CD4-positive, alpha-beta T cell (primary cell): ENCODE measurements at regions of chr13 and their contacts with region 1.

Region 1: GRCh38 chr13:110915057-110915873 is at the start of gene ANKRD10:
- DNase-seq: peak; percentile 82 to 96 (median 90)
- ATAC-seq: peak; percentile 75
- H3K4me3 ChIP-seq: peak within 1 kb of the TSS; percentile 81
- H3K4me3 Mint-ChIP-seq: peak within 1 kb of the TSS; percentile 95
- H3K27ac ChIP-seq: peak within 1 kb of the TSS; percentile 87 to 89
- H3K27ac Mint-ChIP-seq: peak within 1 kb of the TSS; percentile 89
- H3K4me1 ChIP-seq: peaks cover 32% of the 10 kb centered on the region
- H3K4me1 Mint-ChIP-seq: peaks cover 55% of the 10 kb centered on the region
- H3K27me3 ChIP-seq: no peaks in the 10 kb centered on the region
- H3K27me3 Mint-ChIP-seq: no peaks in the 10 kb centered on the region
- CTCF ChIP-seq: peak; percentile 76
- total RNA-seq, gene ANKRD10: 75.5 to 83.8 TPM

Region 2: DNA sequence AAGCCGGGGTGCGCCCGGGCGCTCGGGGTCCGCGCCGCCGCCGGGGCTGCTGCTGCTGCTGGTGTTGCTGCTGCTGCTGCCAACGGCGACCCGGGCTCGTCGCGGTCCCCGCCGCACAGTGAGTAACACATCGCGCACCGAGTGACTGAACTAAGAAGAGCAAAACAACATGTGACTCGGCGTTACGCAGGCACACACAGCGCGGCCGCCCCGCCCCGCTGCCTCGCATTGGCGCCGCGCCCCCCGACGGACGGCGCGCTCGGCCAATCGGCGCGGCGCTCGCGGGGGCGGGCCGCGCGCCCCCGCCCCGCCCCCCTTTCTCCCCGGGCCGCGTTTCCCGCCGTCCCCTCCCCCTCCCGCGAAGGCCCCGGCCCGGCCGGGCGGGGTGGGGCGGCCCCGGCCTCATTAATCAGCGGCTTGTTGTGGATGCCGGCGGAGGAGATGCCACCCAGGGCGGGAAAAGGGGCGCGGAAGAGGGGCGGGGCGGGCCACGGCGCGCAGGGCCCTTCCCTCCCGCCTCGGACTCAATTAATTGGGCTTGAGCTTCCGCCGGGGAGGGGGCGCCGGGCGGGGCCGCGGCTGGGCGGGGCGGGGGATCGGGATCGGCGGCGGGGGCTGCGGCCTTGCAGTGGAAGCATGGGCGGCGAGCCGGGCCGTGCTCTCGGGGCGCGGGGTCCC is 1128.7 kb before region 1 on chr13 and contains the start of gene IRS2:
- CTCF ChIA-PET with region 1: no interaction called
- POLR2A ChIA-PET with region 1: interaction called, 3 read pairs
- intact Hi-C with region 1: loop called in 1 of 2 experiments (anchors 10 kb)
- DNase-seq: peak; percentile 90 to 98 (median 94)
- ATAC-seq: peak; percentile 80
- H3K4me3 ChIP-seq: peak within 1 kb of the TSS; percentile 67
- H3K4me3 Mint-ChIP-seq: peak within 1 kb of the TSS; percentile 94
- H3K27ac ChIP-seq: peak within 1 kb of the TSS in 1 of 2 donors; percentile 59
- H3K27ac Mint-ChIP-seq: peak within 1 kb of the TSS; percentile 75
- H3K4me1 ChIP-seq: peaks cover 34% of the 10 kb centered on the region
- H3K4me1 Mint-ChIP-seq: peaks cover 27% of the 10 kb centered on the region
- H3K27me3 ChIP-seq: no peaks in the 10 kb centered on the region
- H3K27me3 Mint-ChIP-seq: peaks cover 4% of the 10 kb centered on the region
- CTCF ChIP-seq: no peak
- total RNA-seq, gene IRS2: 188 to 193 TPM

Region 3: DNA sequence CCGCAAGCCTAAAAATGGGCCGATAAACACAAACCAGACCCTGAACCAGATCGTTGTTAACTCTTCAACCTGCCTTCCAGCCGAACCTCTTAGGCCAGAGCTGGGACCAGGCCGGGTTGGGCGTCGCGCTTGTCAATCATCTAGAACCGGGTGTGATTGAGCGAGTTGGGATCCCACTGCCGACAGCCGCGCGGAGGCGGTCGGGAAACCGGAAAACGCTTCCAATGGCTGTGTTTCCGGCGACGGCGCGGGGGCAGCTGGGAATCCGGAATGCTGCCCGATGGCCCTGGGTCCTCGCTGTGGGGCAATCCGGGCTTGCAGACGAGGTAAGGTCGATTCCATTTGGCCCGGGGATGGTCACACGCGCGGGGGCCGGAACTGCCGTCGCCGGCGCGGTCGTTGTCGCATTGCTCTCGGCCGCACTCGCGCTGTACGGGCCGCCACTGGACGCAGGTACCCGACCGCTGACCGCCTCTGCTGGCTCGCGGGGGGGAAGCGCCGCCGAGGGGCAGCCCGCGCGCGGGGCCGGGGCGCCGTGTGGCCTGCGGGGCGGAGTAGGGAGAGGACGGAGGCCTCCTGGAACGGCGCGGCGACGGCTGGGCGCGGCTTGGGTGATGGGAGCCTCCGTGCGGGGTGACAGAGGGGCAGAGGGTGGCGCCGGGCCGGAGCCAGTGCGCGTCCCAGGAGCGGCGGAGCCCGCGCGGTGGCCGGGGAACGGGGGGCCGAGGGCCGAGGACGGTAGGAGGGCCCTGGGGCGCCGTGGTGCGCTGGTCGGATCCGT is 299.8 kb before region 1 on chr13 and contains the start of gene NAXD:
- CTCF ChIA-PET with region 1: no interaction called
- POLR2A ChIA-PET with region 1: interaction called, 5 read pairs
- intact Hi-C with region 1: loop called in 1 of 2 experiments (anchors 5 kb)
- DNase-seq: peak; percentile 57 to 85 (median 67)
- ATAC-seq: peak; percentile 79
- H3K4me3 ChIP-seq: peak within 1 kb of the TSS; percentile 85
- H3K4me3 Mint-ChIP-seq: peak within 1 kb of the TSS; percentile 89
- H3K27ac ChIP-seq: peak within 1 kb of the TSS; percentile 22 to 56
- H3K27ac Mint-ChIP-seq: peak within 1 kb of the TSS; percentile 83
- H3K4me1 ChIP-seq: peaks cover 22% of the 10 kb centered on the region
- H3K4me1 Mint-ChIP-seq: peaks cover 42% of the 10 kb centered on the region
- H3K27me3 ChIP-seq: no peaks in the 10 kb centered on the region
- H3K27me3 Mint-ChIP-seq: peaks cover under 1% of the 10 kb centered on the region
- CTCF ChIP-seq: no peak
- total RNA-seq, gene NAXD: 17.4 to 17.8 TPM

Region 4: DNA sequence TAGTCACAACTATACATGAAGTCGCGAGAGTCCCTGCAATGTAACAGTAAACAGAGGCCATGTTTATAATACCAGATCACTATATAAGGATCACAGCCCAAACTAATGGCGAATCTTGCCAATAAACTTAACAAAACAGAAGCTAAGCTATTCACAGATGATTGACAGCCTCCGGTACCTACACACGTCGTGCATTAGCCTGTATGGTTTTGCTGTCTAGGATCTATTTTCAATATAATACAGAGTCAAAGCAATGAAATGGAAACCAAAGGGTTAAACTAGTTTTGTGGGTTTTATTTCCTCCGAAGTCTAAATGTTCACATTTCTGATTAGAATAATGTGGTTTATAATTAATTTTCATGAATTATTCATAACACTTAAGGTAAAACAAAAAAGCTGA is 10.5 kb before region 1 on chr13:
- CTCF ChIA-PET with region 1: interaction called, 14 read pairs
- POLR2A ChIA-PET with region 1: interaction called, 11 read pairs
- intact Hi-C with region 1: no loop called
- DNase-seq: no peak
- ATAC-seq: no peak
- H3K4me3 ChIP-seq: no peak overlapping the region
- H3K4me3 Mint-ChIP-seq: no peak overlapping the region
- H3K27ac ChIP-seq: no peak overlapping the region
- H3K27ac Mint-ChIP-seq: no peak overlapping the region
- H3K4me1 ChIP-seq: peaks cover 3% of the 10 kb centered on the region
- H3K4me1 Mint-ChIP-seq: peaks cover 42% of the 10 kb centered on the region
- H3K27me3 ChIP-seq: no peaks in the 10 kb centered on the region
- H3K27me3 Mint-ChIP-seq: no peaks in the 10 kb centered on the region
- CTCF ChIP-seq: no peak

Region 5: GRCh38 chr13:111184458-111185401 is 269.5 kb after region 1 on chr13:
- CTCF ChIA-PET with region 1: no interaction called
- POLR2A ChIA-PET with region 1: interaction called, 5 read pairs
- intact Hi-C with region 1: loop called in 1 of 2 experiments (anchors 10 kb)
- DNase-seq: peak in 13 of 14 experiments; percentile 19 to 73 (median 45)
- ATAC-seq: peak; percentile 55
- H3K4me3 ChIP-seq: peak overlapping the region; percentile 15
- H3K4me3 Mint-ChIP-seq: peak overlapping the region; percentile 78
- H3K27ac ChIP-seq: peak overlapping the region; percentile 46 to 58
- H3K27ac Mint-ChIP-seq: peak overlapping the region; percentile 94
- H3K4me1 ChIP-seq: peaks cover 89% of the 10 kb centered on the region
- H3K4me1 Mint-ChIP-seq: peaks cover 98% of the 10 kb centered on the region
- H3K27me3 ChIP-seq: no peaks in the 10 kb centered on the region
- H3K27me3 Mint-ChIP-seq: no peaks in the 10 kb centered on the region
- CTCF ChIP-seq: no peak

Region 6: GRCh38 chr13:111228262-111229144 is 313.2 kb after region 1 on chr13:
- CTCF ChIA-PET with region 1: no interaction called
- POLR2A ChIA-PET with region 1: no interaction called
- intact Hi-C with region 1: loop called in 1 of 2 experiments (anchors 10 kb)
- DNase-seq: no peak
- ATAC-seq: no peak
- H3K4me3 ChIP-seq: no peak overlapping the region
- H3K4me3 Mint-ChIP-seq: no peak overlapping the region
- H3K27ac ChIP-seq: no peak overlapping the region
- H3K27ac Mint-ChIP-seq: no peak overlapping the region
- H3K4me1 ChIP-seq: no peaks in the 10 kb centered on the region
- H3K4me1 Mint-ChIP-seq: peaks cover 64% of the 10 kb centered on the region
- H3K27me3 ChIP-seq: no peaks in the 10 kb centered on the region
- H3K27me3 Mint-ChIP-seq: no peaks in the 10 kb centered on the region
- CTCF ChIP-seq: no peak